Activated CD8-positive, alpha-beta T cell treated with anti-CD3 and anti-CD28 coated beads for 36 hours (primary cell): ENCODE measurements at regions of chr9 and their contacts with region 1.

Region 1: GRCh38 chr9:127450830-127451724 is at the starts of genes LRSAM1 and RPL12:
- DNase-seq: peak; percentile 97
- ATAC-seq: peak; percentile 71
- H3K4me3 Mint-ChIP-seq: peak within 1 kb of the TSS; percentile 91
- H3K27ac Mint-ChIP-seq: peak within 1 kb of the TSS; percentile 94
- H3K4me1 Mint-ChIP-seq: peaks cover 38% of the 10 kb centered on the region
- H3K27me3 Mint-ChIP-seq: no peaks in the 10 kb centered on the region
- CTCF ChIP-seq: no peak
- total RNA-seq, gene LRSAM1: 17.1 to 18.6 TPM
- total RNA-seq, gene RPL12: 2,353 to 2,364 TPM

Region 2: GRCh38 chr9:127224178-127224882 is 226.7 kb before region 1 on chr9:
- CTCF ChIA-PET with region 1: interaction called, 3 read pairs
- POLR2A ChIA-PET with region 1: interaction called, 28 read pairs
- intact Hi-C with region 1: no loop called
- DNase-seq: peak; percentile 90
- ATAC-seq: peak; percentile 79
- H3K4me3 Mint-ChIP-seq: peak overlapping the region; percentile 74
- H3K27ac Mint-ChIP-seq: peak overlapping the region; percentile 78
- H3K4me1 Mint-ChIP-seq: peaks cover 31% of the 10 kb centered on the region
- H3K27me3 Mint-ChIP-seq: peaks cover 15% of the 10 kb centered on the region
- CTCF ChIP-seq: peak; percentile 29

Region 3: DNA sequence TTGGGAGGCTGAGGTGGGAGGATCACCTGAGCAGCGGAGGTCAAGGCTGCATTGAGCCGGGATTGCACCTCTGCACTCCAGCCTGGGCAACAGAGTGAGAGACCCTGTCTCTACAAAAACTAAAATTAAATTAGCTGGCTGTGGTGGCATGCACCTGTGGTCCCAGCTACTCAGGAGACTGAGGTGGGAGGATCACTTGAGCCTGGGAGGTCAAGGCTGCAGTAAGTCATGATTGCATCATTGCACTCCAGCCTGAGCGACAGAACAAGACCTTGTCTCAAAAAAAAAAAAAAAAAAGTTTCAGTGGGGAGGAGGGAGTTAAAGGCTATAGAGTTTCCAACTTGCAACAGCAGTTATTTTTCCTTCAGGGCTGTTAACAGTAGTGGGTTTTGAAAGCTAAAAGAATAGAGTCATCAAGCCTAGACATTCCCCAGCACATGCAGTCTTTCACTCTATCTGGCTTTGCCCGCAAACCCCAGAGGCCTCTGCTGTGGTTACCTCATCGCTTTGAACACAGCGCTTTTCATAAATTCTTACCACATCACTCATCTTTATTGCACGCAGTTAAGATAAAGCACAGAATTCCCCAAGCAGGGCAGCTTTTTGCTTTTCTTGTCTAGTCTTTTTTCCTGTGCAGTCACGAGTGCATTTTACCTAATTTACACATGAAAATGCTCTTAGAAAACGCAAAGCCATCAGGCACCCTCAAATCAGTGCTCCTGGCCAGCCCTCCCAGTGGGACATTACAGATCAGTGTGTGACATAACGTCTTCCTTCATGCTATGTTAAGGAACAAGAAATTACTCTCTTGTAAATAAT is 62.8 kb before region 1 on chr9:
- CTCF ChIA-PET with region 1: interaction called, 5 read pairs
- POLR2A ChIA-PET with region 1: interaction called, 27 read pairs
- intact Hi-C with region 1: no loop called
- DNase-seq: peak; percentile 97
- ATAC-seq: peak; percentile 95
- H3K4me3 Mint-ChIP-seq: no peak overlapping the region
- H3K27ac Mint-ChIP-seq: peak overlapping the region; percentile 60
- H3K4me1 Mint-ChIP-seq: peaks cover 34% of the 10 kb centered on the region
- H3K27me3 Mint-ChIP-seq: peaks cover 63% of the 10 kb centered on the region
- CTCF ChIP-seq: no peak

Region 4: GRCh38 chr9:127396808-127397497 is 54.1 kb before region 1 on chr9 and contains the start of gene SLC2A8:
- CTCF ChIA-PET with region 1: no interaction called
- POLR2A ChIA-PET with region 1: interaction called, 10 read pairs
- intact Hi-C with region 1: no loop called
- DNase-seq: peak; percentile 93
- ATAC-seq: peak; percentile 96
- H3K4me3 Mint-ChIP-seq: peak within 1 kb of the TSS; percentile 51
- H3K27ac Mint-ChIP-seq: no peak within 1 kb of the TSS
- H3K4me1 Mint-ChIP-seq: peaks cover 6% of the 10 kb centered on the region
- H3K27me3 Mint-ChIP-seq: peaks cover 62% of the 10 kb centered on the region
- CTCF ChIP-seq: no peak
- total RNA-seq, gene SLC2A8: 1.6 to 2.1 TPM

Region 5: GRCh38 chr9:127423934-127424675 is 27.0 kb before region 1 on chr9 and contains the start of gene ZNF79:
- CTCF ChIA-PET with region 1: interaction called, 6 read pairs
- POLR2A ChIA-PET with region 1: interaction called, 52 read pairs
- intact Hi-C with region 1: no loop called
- DNase-seq: peak; percentile 95
- ATAC-seq: peak; percentile 81
- H3K4me3 Mint-ChIP-seq: peak within 1 kb of the TSS; percentile 98
- H3K27ac Mint-ChIP-seq: peak within 1 kb of the TSS; percentile 96
- H3K4me1 Mint-ChIP-seq: peaks cover 44% of the 10 kb centered on the region
- H3K27me3 Mint-ChIP-seq: no peaks in the 10 kb centered on the region
- CTCF ChIP-seq: no peak
- total RNA-seq, gene ZNF79: 7.6 TPM

Region 6: DNA sequence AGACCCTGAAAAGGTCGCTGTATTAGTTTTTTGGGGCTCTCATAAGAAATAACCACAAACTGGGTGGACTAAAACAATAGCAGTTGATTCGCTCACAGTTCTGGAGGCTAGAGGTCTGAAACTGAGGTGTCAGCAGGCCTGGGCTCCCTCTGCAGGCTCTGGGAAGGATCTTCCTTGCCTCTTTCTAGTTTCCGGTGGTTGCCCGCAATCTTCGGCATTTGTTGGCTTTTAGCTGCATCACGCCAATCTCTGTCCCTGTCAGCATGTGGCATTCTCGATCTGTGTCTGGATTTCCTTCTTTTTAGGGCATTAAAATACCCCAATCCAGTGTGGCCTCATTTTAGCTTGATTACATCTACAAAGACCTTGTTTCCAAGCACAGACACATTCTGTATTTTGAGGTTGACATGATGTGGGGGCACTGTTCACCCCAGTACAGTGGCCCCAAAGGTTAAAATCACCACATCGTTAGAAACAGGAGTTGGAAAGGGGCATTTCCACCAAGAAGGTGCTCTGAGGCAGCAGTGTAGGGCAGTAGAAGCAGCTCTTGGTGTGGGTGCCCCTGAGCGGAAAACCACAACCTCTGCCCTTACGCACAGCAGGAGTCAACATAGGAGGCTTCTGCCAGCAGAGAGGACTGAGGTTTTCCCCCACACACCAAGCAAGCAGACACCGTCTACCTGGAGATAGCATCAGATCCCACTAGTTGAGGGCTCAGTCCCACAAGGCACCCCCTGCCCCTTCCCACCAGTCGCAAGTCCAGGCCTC is 13.4 kb before region 1 on chr9:
- CTCF ChIA-PET with region 1: interaction called, 3 read pairs
- POLR2A ChIA-PET with region 1: interaction called, 40 read pairs
- intact Hi-C with region 1: no loop called
- DNase-seq: peak; percentile 54
- ATAC-seq: peak; percentile 86
- H3K4me3 Mint-ChIP-seq: no peak overlapping the region
- H3K27ac Mint-ChIP-seq: peak overlapping the region; percentile 72
- H3K4me1 Mint-ChIP-seq: peaks cover 16% of the 10 kb centered on the region
- H3K27me3 Mint-ChIP-seq: no peaks in the 10 kb centered on the region
- CTCF ChIP-seq: no peak

Region 7: GRCh38 chr9:127555768-127556397 is 104.8 kb after region 1 on chr9:
- CTCF ChIA-PET with region 1: no interaction called
- POLR2A ChIA-PET with region 1: interaction called, 12 read pairs
- intact Hi-C with region 1: no loop called
- DNase-seq: peak; percentile 88
- ATAC-seq: peak; percentile 92
- H3K4me3 Mint-ChIP-seq: peak overlapping the region; percentile 45
- H3K27ac Mint-ChIP-seq: peak overlapping the region; percentile 81
- H3K4me1 Mint-ChIP-seq: peaks cover 45% of the 10 kb centered on the region
- H3K27me3 Mint-ChIP-seq: no peaks in the 10 kb centered on the region
- CTCF ChIP-seq: no peak

Region 8: GRCh38 chr9:127629468-127630081 is 178.5 kb after region 1 on chr9:
- CTCF ChIA-PET with region 1: no interaction called
- POLR2A ChIA-PET with region 1: no interaction called
- intact Hi-C with region 1: no loop called
- DNase-seq: peak; percentile 6
- ATAC-seq: peak; percentile 49
- H3K4me3 Mint-ChIP-seq: no peak overlapping the region
- H3K27ac Mint-ChIP-seq: no peak overlapping the region
- H3K4me1 Mint-ChIP-seq: peaks cover 10% of the 10 kb centered on the region
- H3K27me3 Mint-ChIP-seq: no peaks in the 10 kb centered on the region
- CTCF ChIP-seq: no peak